GM12878 (cell line): ENCODE measurements at regions of chr3 and their contacts with region 1.

Region 1: GRCh38 chr3:171365489-171365888 is 94.7 kb downstream of the TNIK start:
- DNase-seq: no peak
- ATAC-seq: no peak
- H3K4me3 ChIP-seq: no peak overlapping the region
- H3K27ac ChIP-seq: no peak overlapping the region
- H3K4me1 ChIP-seq: peaks cover 15% of the 10 kb centered on the region
- H3K27me3 ChIP-seq: no peaks in the 10 kb centered on the region
- CTCF ChIP-seq: no peak
- EP300 ChIP-seq: no peak
- POLR2A ChIP-seq: no peak
- RAD21 ChIP-seq: no peak

Region 2: GRCh38 chr3:171306631-171307030 is 58.9 kb before region 1 on chr3:
- CTCF ChIA-PET with region 1: no interaction called
- POLR2A ChIA-PET with region 1: interaction called, 10 read pairs
- RAD21 ChIA-PET with region 1: no interaction called
- SMC1A ChIA-PET with region 1: no interaction called
- in situ Hi-C with region 1: no loop called
- intact Hi-C with region 1: no loop called
- DNase-seq: no peak
- ATAC-seq: peak; percentile 15
- H3K4me3 ChIP-seq: no peak overlapping the region
- H3K27ac ChIP-seq: peak overlapping the region; percentile 38; the same call in 1 of the 2 replicates
- H3K4me1 ChIP-seq: peaks cover 13% of the 10 kb centered on the region
- H3K27me3 ChIP-seq: no peaks in the 10 kb centered on the region
- CTCF ChIP-seq: no peak
- EP300 ChIP-seq: no peak
- POLR2A ChIP-seq: no peak
- RAD21 ChIP-seq: no peak

Region 3: DNA sequence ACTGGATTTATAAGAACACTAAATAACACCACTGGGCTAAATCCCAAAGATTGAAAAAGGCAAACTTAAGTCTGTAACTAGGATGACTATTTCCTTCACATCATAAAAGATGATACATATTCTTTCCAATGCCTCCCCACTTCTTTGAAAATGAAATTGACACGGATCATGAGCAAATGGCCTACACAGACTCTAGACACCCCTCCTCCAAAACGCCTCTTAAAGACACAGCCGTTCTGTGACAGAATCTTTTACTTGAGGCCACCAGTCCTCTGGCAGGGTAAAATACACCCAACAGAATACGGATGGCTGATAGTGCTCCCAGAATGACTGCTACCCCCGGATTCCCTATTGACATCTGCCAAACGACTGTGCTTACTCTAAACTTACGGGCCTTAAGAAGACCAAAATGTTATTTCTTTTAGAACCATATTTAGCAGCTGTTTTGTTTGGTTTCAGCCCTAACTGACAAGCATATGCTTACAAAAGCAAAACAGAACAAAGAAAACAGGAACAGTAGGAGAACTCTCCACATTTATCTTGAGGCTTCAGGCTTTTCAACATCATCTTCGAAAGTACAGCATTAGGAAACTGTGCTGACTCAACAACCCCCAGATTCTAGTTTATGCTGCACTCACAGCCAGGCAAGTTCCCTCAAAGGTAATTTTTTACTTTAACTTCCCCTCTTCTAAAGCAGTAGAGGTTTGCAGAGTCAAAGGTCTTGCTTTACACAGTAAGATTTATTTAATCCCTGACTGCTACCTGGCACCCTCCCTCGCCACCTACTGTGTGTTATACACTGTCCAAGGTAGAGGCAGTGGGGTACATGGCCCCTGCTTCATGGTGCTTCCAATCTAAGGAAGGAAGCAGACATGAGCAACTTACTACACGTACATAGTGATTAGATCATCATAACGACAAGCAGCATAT is 10.4 kb after region 1 on chr3:
- CTCF ChIA-PET with region 1: interaction called, 12 read pairs
- POLR2A ChIA-PET with region 1: interaction called, 4 read pairs
- RAD21 ChIA-PET with region 1: interaction called, 5 read pairs
- SMC1A ChIA-PET with region 1: interaction called, 56 read pairs
- in situ Hi-C with region 1: no loop called
- intact Hi-C with region 1: no loop called
- DNase-seq: no peak
- ATAC-seq: peak; percentile 69
- H3K4me3 ChIP-seq: no peak overlapping the region
- H3K27ac ChIP-seq: peak overlapping the region; percentile 22; the same call in 1 of the 2 replicates
- H3K4me1 ChIP-seq: peaks cover 37% of the 10 kb centered on the region
- H3K27me3 ChIP-seq: no peaks in the 10 kb centered on the region
- CTCF ChIP-seq: no peak
- EP300 ChIP-seq: no peak
- POLR2A ChIP-seq: no peak
- RAD21 ChIP-seq: no peak